HEK293 (cell line): ENCODE measurements at regions of chr10 and their contacts with region 1.

Region 1: DNA sequence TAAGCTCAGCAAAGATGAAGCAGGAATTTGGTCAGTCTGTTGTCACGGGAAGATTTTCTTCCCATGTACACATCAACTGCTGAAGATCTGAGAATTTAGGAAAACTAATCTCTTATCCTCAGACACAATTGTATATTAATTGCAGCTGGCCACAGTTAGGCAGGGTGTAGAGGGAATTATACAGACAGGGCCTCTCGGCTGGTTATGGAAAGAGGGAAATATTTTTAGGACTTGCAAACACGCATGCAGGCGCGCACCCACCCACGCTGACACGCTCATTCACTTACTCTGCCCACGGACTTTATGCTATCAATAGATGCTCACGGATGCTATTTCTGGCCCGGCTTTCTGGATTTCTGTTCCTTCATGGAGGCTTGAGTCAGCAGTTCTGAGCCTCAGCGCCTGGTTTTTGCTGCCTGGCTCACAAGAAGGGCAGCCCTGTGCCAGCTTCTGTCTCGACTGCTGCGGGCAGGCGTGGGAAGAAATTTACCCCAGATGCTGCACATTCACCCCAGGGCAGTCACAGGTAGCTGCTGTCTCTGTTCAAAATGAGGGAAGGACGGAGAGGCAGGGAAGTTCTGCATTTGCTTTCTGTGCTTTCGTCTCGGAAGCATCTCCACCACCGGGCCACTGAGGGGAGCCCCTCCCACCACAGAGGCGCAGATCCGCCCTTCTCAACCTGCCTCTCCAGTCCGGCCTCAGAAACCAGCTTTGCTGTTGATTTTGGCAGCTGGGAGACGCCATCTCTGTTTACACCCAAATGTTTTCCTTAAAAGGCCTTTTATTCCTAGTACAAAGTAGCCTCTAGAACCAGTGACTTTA is 116.3 kb upstream of the BTBD16 start:
- H3K4me3 ChIP-seq: no peak overlapping the region
- H3K27ac ChIP-seq: no peak overlapping the region
- H3K4me1 ChIP-seq: peaks cover 2% of the 10 kb centered on the region; the same call in 1 of the 2 replicates
- CTCF ChIP-seq: no peak

Region 2: GRCh38 chr10:122010405-122011050 is 144.2 kb before region 1 on chr10:
- CTCF ChIA-PET with region 1: no interaction called
- POLR2A ChIA-PET with region 1: no interaction called
- H3K4me3 ChIP-seq: no peak overlapping the region
- H3K27ac ChIP-seq: no peak overlapping the region
- H3K4me1 ChIP-seq: no peaks in the 10 kb centered on the region
- CTCF ChIP-seq: no peak

Region 3: DNA sequence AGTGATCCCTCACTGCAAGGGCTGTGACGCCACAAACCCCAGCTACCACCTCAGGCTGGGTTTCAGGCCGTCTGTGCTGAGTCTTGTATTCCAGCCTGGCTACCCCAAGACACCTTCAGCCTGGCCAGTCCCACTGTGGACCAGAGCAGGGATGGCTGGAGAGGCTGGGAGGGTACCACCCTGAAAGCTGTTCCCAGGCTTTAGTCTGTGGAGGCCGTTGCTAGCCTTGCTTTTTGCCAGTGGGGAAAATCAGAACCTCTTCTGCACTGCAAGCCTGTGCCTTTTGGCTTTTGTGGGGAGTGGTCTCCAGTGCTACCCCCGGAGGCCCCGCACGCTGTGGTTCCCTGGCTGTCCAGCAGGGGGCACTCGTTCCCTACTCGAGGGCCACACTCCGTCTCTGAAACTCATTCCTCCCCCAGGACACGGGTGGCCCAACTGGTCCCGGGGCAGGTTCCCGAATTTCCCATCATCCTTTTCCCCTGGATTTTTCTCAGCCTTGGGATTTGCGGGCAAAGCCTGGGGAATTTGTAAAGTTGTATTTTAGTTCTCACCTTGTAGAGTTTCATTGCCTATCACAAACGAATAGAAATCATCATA is 12.0 kb before region 1 on chr10:
- CTCF ChIA-PET with region 1: interaction called, 15 read pairs
- POLR2A ChIA-PET with region 1: no interaction called
- H3K4me3 ChIP-seq: no peak overlapping the region
- H3K27ac ChIP-seq: no peak overlapping the region
- H3K4me1 ChIP-seq: peaks cover 6% of the 10 kb centered on the region
- CTCF ChIP-seq: peak; percentile 74